Naive thymus-derived CD4-positive, alpha-beta T cell (primary cell): ENCODE measurements at regions of chr2 and their contacts with region 1.

Region 1: DNA sequence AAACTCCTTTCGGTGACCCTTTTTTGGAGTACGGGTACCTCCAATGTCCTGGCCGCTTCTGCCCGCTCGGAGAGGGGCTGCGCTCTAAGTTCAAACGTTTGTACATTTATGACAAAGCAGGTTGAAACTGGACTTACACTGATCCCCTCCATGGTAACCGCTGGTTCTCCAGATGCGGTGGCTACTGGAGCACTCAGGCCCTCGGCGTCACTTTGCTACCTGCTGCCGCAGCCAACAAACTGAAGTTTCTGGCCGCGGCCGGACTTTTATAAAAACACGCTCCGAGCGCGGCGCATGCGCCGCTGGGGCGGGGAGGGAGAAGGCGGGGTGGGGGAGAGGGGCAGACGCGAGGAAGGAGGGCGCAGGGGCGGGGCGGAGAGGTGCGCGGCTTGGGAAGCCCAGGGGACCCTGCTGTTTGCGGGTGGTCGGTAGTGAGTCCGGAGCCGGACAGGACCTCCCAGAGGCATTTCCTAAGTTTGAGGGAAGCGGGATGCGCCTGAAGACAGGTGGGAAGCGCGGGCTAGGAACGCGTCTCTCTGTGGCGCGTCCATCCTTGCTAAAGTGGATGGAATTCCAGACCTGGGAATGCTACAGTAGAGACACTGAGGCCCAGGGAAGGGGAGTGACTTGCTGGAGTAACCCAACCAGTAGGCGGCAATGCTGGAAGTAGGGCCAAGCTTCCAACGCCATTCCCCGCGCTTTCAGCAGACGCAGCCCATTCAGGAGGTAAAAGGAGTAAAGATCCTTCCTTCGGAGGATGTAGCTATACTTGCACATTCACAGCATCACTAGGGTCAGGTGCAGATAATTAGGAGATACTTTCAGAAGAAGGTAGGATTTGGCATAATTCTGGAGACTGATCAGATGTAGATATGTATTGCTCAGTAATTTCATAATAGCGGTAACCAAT is at the start of gene CXCR4:
- DNase-seq: peak; percentile 87 to 97 (median 91)
- ATAC-seq: peak; percentile 51
- H3K4me3 ChIP-seq: peak within 1 kb of the TSS; percentile 89
- H3K4me3 Mint-ChIP-seq: peak within 1 kb of the TSS; percentile 84 to 100 (median 98)
- H3K27ac ChIP-seq: peak within 1 kb of the TSS; percentile 94
- H3K27ac Mint-ChIP-seq: peak within 1 kb of the TSS; percentile 98 to 100 (median 99)
- H3K4me1 ChIP-seq: peaks cover 40 to 44% of the 10 kb centered on the region in 2 donors
- H3K4me1 Mint-ChIP-seq: peaks cover 17 to 69% (median 64%) of the 10 kb centered on the region in 7 donors
- H3K27me3 ChIP-seq: no peaks in the 10 kb centered on the region
- H3K27me3 Mint-ChIP-seq: peaks cover 0 to 39% (median 0%) of the 10 kb centered on the region in 5 donors
- total RNA-seq, gene CXCR4: 239 to 1,323 (median 255) TPM

Region 2: GRCh38 chr2:135741395-135742324 is 376.5 kb before region 1 on chr2 and contains the start of gene UBXN4:
- CTCF ChIA-PET with region 1: no interaction called
- POLR2A ChIA-PET with region 1: no interaction called
- intact Hi-C with region 1: loop called in 1 of 2 experiments (anchors 5 kb)
- DNase-seq: peak; percentile 73 to 93 (median 88)
- ATAC-seq: peak; percentile 95
- H3K4me3 ChIP-seq: peak within 1 kb of the TSS; percentile 88
- H3K4me3 Mint-ChIP-seq: peak within 1 kb of the TSS; percentile 92 to 98 (median 95)
- H3K27ac ChIP-seq: peak within 1 kb of the TSS; percentile 97
- H3K27ac Mint-ChIP-seq: peak within 1 kb of the TSS; percentile 89 to 99 (median 95)
- H3K4me1 ChIP-seq: peaks cover 20 to 22% of the 10 kb centered on the region in 2 donors
- H3K4me1 Mint-ChIP-seq: peaks cover 24 to 47% (median 43%) of the 10 kb centered on the region in 7 donors
- H3K27me3 ChIP-seq: no peaks in the 10 kb centered on the region
- H3K27me3 Mint-ChIP-seq: no peaks in the 10 kb centered on the region
- total RNA-seq, gene UBXN4: 115 to 158 (median 145) TPM

Region 3: GRCh38 chr2:135985018-135985825 is 132.9 kb before region 1 on chr2 and contains the start of gene DARS1:
- CTCF ChIA-PET with region 1: no interaction called
- POLR2A ChIA-PET with region 1: interaction called, 9 read pairs
- intact Hi-C with region 1: loop called (anchors 1 kb)
- DNase-seq: peak; percentile 67 to 89 (median 78)
- ATAC-seq: peak; percentile 92
- H3K4me3 ChIP-seq: peak within 1 kb of the TSS; percentile 82
- H3K4me3 Mint-ChIP-seq: peak within 1 kb of the TSS; percentile 90 to 99 (median 97)
- H3K27ac ChIP-seq: peak within 1 kb of the TSS; percentile 95
- H3K27ac Mint-ChIP-seq: peak within 1 kb of the TSS; percentile 98 to 99 (median 98)
- H3K4me1 ChIP-seq: peaks cover 0 to 24% of the 10 kb centered on the region in 2 donors
- H3K4me1 Mint-ChIP-seq: peaks cover 9 to 66% (median 54%) of the 10 kb centered on the region in 7 donors
- H3K27me3 ChIP-seq: no peaks in the 10 kb centered on the region
- H3K27me3 Mint-ChIP-seq: no peaks in the 10 kb centered on the region
- total RNA-seq, gene DARS1: 45.3 to 140 (median 63.4) TPM

Region 4: DNA sequence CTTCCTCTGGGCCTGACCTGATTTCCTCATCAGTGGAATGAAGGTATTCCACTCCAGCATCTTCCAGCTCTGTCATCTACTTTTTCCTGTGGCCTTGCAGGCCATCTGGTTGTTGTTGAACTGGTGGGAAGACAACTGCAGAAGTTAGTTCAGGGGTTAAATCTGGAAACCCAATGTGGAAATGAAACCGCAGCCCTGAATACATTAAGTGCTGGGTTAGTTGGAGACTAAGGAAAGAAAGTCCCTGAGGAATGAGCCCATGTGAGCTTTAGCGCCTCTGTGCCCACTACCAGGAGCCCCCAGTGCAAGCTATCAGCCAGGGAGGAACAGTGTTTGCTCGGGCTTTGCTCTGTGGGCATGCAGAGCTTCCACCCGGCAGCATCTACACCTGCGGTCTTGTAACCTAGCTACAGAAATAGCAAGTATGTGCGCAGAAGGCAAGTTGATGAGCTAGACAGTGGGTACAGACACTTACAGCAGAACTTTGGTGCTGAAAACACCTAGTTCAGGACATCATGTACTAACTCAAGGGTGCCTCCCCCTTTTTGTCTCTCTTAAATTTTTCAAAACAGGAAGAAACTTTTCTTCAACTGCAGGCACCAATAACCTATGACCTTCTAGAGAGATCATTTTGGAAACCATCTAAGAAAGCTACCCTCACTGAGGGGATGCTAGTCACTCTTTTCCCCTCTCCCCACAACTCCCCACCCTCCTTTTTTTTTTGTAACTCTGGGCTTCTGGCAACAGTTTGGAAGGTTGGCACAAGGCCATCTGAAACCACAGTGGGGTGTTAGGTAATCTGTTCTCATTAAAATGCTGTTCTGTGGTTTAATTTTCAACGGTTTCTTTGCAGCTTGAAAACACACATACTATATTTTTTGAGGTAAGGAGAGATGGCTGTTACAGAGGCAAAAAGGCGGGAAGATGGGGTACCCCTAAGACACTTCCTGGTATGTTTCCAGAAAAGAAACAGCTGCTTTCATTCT is 18.1 kb after region 1 on chr2:
- CTCF ChIA-PET with region 1: interaction called, 14 read pairs
- POLR2A ChIA-PET with region 1: interaction called, 331 read pairs
- intact Hi-C with region 1: loop called (anchors 1 kb)
- DNase-seq: peak; percentile 32 to 98 (median 95)
- ATAC-seq: peak; percentile 76
- H3K4me3 ChIP-seq: peak overlapping the region; percentile 15
- H3K4me3 Mint-ChIP-seq: peak overlapping the region; percentile 52 to 92 (median 81)
- H3K27ac ChIP-seq: peak overlapping the region; percentile 99
- H3K27ac Mint-ChIP-seq: peak overlapping the region; percentile 82 to 100 (median 99)
- H3K4me1 ChIP-seq: peaks cover 86 to 87% of the 10 kb centered on the region in 2 donors
- H3K4me1 Mint-ChIP-seq: peaks cover 70 to 100% (median 94%) of the 10 kb centered on the region in 7 donors
- H3K27me3 ChIP-seq: no peaks in the 10 kb centered on the region
- H3K27me3 Mint-ChIP-seq: peaks cover 0 to 50% (median 0%) of the 10 kb centered on the region in 5 donors

Region 5: GRCh38 chr2:136281281-136282114 is 163.3 kb after region 1 on chr2:
- CTCF ChIA-PET with region 1: no interaction called
- POLR2A ChIA-PET with region 1: interaction called, 11 read pairs
- intact Hi-C with region 1: no loop called
- DNase-seq: peak; percentile 24 to 73 (median 53)
- ATAC-seq: peak; percentile 91
- H3K4me3 ChIP-seq: no peak overlapping the region
- H3K4me3 Mint-ChIP-seq: peak overlapping the region; percentile 16 to 79 (median 52)
- H3K27ac ChIP-seq: peak overlapping the region; percentile 58
- H3K27ac Mint-ChIP-seq: peak overlapping the region; percentile 86 to 98 (median 94)
- H3K4me1 ChIP-seq: peaks cover 26 to 33% of the 10 kb centered on the region in 2 donors
- H3K4me1 Mint-ChIP-seq: peaks cover 28 to 59% (median 50%) of the 10 kb centered on the region in 7 donors
- H3K27me3 ChIP-seq: no peaks in the 10 kb centered on the region
- H3K27me3 Mint-ChIP-seq: no peaks in the 10 kb centered on the region